ENCODE measurements at regions of chr1 and their contacts with region 1.

Region 1: DNA sequence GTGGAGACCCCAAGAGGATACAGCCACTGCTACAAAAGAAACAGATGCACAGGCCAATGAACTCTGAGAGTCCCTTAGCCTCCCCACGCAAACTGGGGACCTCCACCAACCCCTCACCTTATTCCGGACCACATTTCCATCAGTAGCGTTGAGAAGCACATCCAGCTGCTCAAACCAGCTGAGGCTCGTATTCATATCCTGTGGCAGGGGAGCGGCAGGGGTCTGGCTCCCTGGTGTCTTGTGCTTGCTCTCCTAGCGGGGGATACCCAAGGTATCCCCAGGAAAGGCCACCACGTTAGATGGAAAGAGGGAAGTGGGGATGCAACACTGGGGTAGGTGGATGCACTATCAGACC is 481 bp downstream of the CCDC163 start:
- DNase-seq: peak; percentile 30
- H3K4me3 Mint-ChIP-seq: peak overlapping the region; percentile 91
- H3K27ac Mint-ChIP-seq: peak overlapping the region; percentile 84
- H3K4me1 Mint-ChIP-seq: peaks cover 32% of the 10 kb centered on the region
- H3K27me3 Mint-ChIP-seq: no peaks in the 10 kb centered on the region

Region 2: DNA sequence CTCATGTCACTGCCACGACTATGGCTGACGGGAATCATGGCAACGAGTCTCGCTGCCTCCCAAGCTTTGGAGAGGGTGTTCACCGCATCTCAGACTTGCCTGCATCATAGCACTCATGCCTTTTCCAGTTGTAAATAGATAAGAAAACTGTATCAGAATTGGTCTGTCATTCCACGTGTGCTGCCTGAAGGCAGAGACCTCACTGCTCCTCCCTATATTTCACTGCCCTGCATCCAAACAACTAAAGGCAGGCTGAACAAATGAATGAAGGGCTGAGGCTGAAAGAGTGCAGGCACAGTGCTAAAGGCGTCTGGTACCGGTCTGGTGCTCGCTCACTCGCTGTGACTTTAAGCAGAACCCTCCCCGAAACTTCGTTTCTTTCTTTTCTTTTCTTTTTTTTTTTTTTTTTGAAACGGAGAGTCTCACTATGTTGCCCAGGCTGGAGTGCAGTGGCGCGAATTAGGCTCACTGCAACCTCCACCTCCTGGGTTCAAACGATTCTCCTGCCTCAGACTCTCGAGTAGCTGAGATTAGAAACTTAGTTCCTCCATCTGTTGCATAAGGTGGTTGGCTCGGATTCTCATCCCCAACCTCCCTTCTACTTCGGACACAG is 513.5 kb before region 1 on chr1:
- CTCF ChIA-PET with region 1: no interaction called
- intact Hi-C with region 1: loop called (anchors 1 kb)
- DNase-seq: no peak
- H3K4me3 Mint-ChIP-seq: peak overlapping the region; percentile 100
- H3K27ac Mint-ChIP-seq: peak overlapping the region; percentile 80
- H3K4me1 Mint-ChIP-seq: peaks cover 23% of the 10 kb centered on the region
- H3K27me3 Mint-ChIP-seq: no peaks in the 10 kb centered on the region

Region 3: GRCh38 chr1:45187725-45188124 is 311.7 kb before region 1 on chr1:
- CTCF ChIA-PET with region 1: no interaction called
- intact Hi-C with region 1: no loop called
- DNase-seq: no peak
- H3K4me3 Mint-ChIP-seq: no peak overlapping the region
- H3K27ac Mint-ChIP-seq: no peak overlapping the region
- H3K4me1 Mint-ChIP-seq: peaks cover 14% of the 10 kb centered on the region
- H3K27me3 Mint-ChIP-seq: no peaks in the 10 kb centered on the region

Region 4: DNA sequence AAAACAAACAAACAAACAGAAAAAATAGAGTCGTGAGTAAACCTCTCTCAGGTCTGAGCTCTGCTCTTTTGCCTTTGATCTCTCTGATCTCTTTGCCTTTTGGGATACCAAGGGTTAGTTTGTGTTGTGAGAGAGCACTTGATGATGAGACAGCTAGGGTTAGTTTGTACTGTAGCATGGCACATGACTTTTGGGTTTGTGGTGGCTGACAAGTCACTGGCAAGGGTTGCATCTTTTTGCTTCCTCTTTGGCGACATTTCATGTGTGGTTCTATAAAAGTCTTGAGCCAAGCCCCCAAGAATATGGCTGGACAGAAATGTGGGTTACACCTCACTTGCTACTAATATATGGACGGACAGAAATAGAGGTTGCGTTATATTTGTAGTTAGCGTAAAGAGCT is 68.9 kb before region 1 on chr1:
- CTCF ChIA-PET with region 1: no interaction called
- intact Hi-C with region 1: no loop called
- DNase-seq: no peak
- H3K4me3 Mint-ChIP-seq: no peak overlapping the region
- H3K27ac Mint-ChIP-seq: no peak overlapping the region
- H3K4me1 Mint-ChIP-seq: no peaks in the 10 kb centered on the region
- H3K27me3 Mint-ChIP-seq: no peaks in the 10 kb centered on the region

Region 5: GRCh38 chr1:45512641-45513054 is 13.3 kb after region 1 on chr1:
- CTCF ChIA-PET with region 1: interaction called, 27 read pairs
- intact Hi-C with region 1: no loop called
- DNase-seq: peak; percentile 77
- H3K4me3 Mint-ChIP-seq: no peak overlapping the region
- H3K27ac Mint-ChIP-seq: no peak overlapping the region
- H3K4me1 Mint-ChIP-seq: peaks cover 14% of the 10 kb centered on the region
- H3K27me3 Mint-ChIP-seq: no peaks in the 10 kb centered on the region

Region 6: GRCh38 chr1:45543581-45544417 is 44.4 kb after region 1 on chr1:
- CTCF ChIA-PET with region 1: no interaction called
- intact Hi-C with region 1: loop called (anchors 1 kb)
- DNase-seq: peak; percentile 90
- H3K4me3 Mint-ChIP-seq: peak overlapping the region; percentile 25
- H3K27ac Mint-ChIP-seq: peak overlapping the region; percentile 74
- H3K4me1 Mint-ChIP-seq: peaks cover 34% of the 10 kb centered on the region
- H3K27me3 Mint-ChIP-seq: no peaks in the 10 kb centered on the region

Region 7: DNA sequence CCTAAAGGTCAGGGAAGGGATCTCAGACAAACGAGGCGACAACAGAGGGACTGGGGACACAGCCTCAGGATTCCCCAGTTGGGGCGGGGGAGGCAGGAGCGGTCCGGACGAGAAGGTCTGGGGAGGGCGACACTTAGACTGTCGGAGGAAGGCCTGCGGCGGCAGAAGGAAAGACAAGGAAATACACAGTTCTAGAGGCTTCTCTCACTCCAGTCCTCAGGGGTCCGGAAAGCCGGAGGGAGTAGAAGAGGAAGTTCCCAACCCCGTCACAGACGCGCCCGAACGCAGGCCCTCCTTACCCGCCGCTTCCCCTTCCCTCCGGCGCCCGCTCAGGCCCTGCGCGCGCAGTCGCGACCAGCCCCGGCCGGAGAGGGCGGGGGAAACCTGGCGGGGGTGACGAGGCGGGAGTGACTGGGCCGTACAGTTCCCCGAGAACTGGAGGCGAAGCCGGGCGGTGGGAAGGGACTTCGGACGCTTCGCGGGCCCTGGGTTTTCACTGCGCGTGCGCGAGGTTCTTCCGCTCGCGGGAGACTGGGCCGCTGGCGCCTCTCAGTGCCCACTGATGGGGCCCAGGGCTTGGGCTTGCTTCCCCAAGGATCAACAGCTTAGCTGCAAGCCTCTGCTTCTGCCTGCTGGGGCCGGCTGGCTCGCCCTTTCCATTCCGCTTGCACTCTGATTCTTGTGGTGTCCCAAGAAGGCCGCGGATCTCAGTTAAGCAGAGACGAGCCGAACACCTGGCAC is 251.1 kb after region 1 on chr1 and contains the start of gene IPP:
- CTCF ChIA-PET with region 1: no interaction called
- intact Hi-C with region 1: loop called (anchors 2 kb)
- DNase-seq: peak; percentile 96
- H3K4me3 Mint-ChIP-seq: peak within 1 kb of the TSS; percentile 95
- H3K27ac Mint-ChIP-seq: peak within 1 kb of the TSS; percentile 97
- H3K4me1 Mint-ChIP-seq: peaks cover 31% of the 10 kb centered on the region
- H3K27me3 Mint-ChIP-seq: no peaks in the 10 kb centered on the region
- total RNA-seq, gene IPP: 19.1 to 20.2 TPM

Measured in activated naive CD4-positive, alpha-beta T cell treated with anti-CD3 and anti-CD28 coated beads for 36 hours (primary cell).